PC-3 (cell line): ENCODE measurements at regions of chr1 and their contacts with region 1.

Region 1: GRCh38 chr1:215526553-215527151 is 40.5 kb upstream of the KCTD3 start:
- DNase-seq: peak; percentile 92
- ATAC-seq: peak; percentile 75
- H3K4me3 ChIP-seq: no peak overlapping the region
- H3K27ac ChIP-seq: no peak overlapping the region
- H3K4me1 ChIP-seq: no peaks in the 10 kb centered on the region
- H3K27me3 ChIP-seq: no peaks in the 10 kb centered on the region
- CTCF ChIP-seq: peak; percentile 95

Region 2: GRCh38 chr1:214328770-214329469 is 1197.7 kb before region 1 on chr1:
- CTCF ChIA-PET with region 1: interaction called, 3 read pairs
- POLR2A ChIA-PET with region 1: no interaction called
- intact Hi-C with region 1: loop called (anchors 2 kb)
- DNase-seq: peak; percentile 96
- ATAC-seq: peak; percentile 93
- H3K4me3 ChIP-seq: no peak overlapping the region
- H3K27ac ChIP-seq: no peak overlapping the region
- H3K4me1 ChIP-seq: peaks cover 4% of the 10 kb centered on the region
- H3K27me3 ChIP-seq: no peaks in the 10 kb centered on the region
- CTCF ChIP-seq: peak; percentile 96

Region 3: GRCh38 chr1:214637722-214638458 is 888.8 kb before region 1 on chr1:
- CTCF ChIA-PET with region 1: no interaction called
- POLR2A ChIA-PET with region 1: no interaction called
- intact Hi-C with region 1: loop called (anchors 5 kb)
- DNase-seq: peak; percentile 68
- ATAC-seq: peak; percentile 83
- H3K4me3 ChIP-seq: no peak overlapping the region
- H3K27ac ChIP-seq: no peak overlapping the region
- H3K4me1 ChIP-seq: peaks cover 18% of the 10 kb centered on the region
- H3K27me3 ChIP-seq: no peaks in the 10 kb centered on the region
- CTCF ChIP-seq: peak; percentile 97

Region 4: DNA sequence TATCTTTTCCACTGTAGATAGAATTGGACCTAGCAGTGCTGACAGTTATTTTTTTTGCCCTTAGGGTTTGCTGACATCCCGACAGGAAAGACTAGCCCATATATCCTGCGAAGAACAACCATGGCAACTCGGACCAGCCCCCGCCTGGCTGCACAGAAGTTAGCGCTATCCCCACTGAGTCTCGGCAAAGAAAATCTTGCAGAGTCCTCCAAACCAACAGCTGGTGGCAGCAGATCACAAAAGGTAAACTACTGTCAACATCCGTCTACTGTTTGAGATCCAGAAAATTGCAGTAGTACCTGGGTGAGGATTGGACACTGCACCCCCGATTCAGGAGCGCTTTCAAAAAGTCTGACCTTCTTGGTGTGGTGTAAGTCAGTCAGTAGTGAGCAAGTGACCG is 867.9 kb before region 1 on chr1:
- CTCF ChIA-PET with region 1: interaction called, 3 read pairs
- POLR2A ChIA-PET with region 1: no interaction called
- intact Hi-C with region 1: loop called (anchors 1 kb)
- DNase-seq: peak; percentile 46
- ATAC-seq: peak; percentile 70
- H3K4me3 ChIP-seq: no peak overlapping the region
- H3K27ac ChIP-seq: no peak overlapping the region
- H3K4me1 ChIP-seq: no peaks in the 10 kb centered on the region
- H3K27me3 ChIP-seq: no peaks in the 10 kb centered on the region
- CTCF ChIP-seq: peak; percentile 65

Region 5: GRCh38 chr1:214808845-214809460 is 717.7 kb before region 1 on chr1:
- CTCF ChIA-PET with region 1: interaction called, 5 read pairs
- POLR2A ChIA-PET with region 1: no interaction called
- intact Hi-C with region 1: loop called (anchors 1 kb)
- DNase-seq: peak; percentile 85
- ATAC-seq: peak; percentile 99
- H3K4me3 ChIP-seq: no peak overlapping the region
- H3K27ac ChIP-seq: no peak overlapping the region
- H3K4me1 ChIP-seq: no peaks in the 10 kb centered on the region
- H3K27me3 ChIP-seq: no peaks in the 10 kb centered on the region
- CTCF ChIP-seq: peak; percentile 96

Region 6: DNA sequence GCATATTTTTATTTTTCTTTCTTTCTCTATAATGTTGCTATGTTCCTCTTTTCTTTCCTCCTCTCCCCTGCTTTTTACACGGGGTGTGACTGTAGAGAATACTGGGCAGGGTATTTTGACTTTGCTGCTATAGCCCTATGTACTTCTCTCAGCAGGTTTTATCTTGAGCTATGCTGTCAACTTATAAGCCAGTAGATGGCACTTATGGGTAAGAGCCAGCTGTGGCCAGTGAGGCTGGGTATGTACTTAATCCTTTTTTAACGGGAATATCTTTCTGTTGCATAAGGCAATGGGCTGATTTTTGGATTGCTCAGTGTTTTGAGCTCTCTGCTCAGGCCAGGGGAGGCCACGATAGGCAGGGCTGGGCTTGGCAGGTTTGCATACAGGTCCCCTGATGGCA is 345.1 kb before region 1 on chr1:
- CTCF ChIA-PET with region 1: interaction called, 13 read pairs
- POLR2A ChIA-PET with region 1: no interaction called
- intact Hi-C with region 1: loop called (anchors 1 kb)
- DNase-seq: peak; percentile 80
- ATAC-seq: peak; percentile 99
- H3K4me3 ChIP-seq: no peak overlapping the region
- H3K27ac ChIP-seq: no peak overlapping the region
- H3K4me1 ChIP-seq: no peaks in the 10 kb centered on the region
- H3K27me3 ChIP-seq: no peaks in the 10 kb centered on the region
- CTCF ChIP-seq: peak; percentile 91

Region 7: DNA sequence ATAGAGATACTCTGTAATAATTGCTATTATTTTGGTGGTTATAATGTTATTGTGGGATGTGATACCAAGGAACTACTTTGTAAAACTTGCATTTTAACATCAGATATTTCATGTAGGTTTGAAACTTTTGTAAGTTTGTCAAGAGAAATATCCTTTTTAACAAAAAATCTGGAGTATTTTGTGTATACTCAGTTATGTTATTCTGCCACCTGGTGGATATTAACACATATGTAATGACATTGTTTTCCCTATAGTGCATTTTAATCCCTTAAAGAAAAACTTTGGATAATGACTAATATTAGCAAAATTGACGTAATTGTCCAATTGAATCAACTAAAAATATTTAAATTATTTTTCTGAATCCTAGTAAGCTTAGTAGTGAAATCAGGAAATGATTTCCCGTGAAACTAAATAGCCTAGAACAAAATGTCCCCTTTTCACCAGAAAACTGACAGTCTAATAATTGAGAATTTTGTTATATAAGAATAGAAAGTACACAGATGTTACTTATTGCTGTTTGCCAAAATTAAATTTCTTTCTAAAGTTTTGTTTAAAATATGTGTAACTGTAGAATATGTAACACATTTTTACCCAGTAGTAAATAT is 80.0 kb after region 1 on chr1:
- CTCF ChIA-PET with region 1: no interaction called
- POLR2A ChIA-PET with region 1: no interaction called
- intact Hi-C with region 1: loop called (anchors 1 kb)
- DNase-seq: peak; percentile 75
- ATAC-seq: peak; percentile 78
- H3K4me3 ChIP-seq: no peak overlapping the region
- H3K27ac ChIP-seq: no peak overlapping the region
- H3K4me1 ChIP-seq: no peaks in the 10 kb centered on the region
- H3K27me3 ChIP-seq: no peaks in the 10 kb centered on the region
- CTCF ChIP-seq: peak; percentile 95

Region 8: DNA sequence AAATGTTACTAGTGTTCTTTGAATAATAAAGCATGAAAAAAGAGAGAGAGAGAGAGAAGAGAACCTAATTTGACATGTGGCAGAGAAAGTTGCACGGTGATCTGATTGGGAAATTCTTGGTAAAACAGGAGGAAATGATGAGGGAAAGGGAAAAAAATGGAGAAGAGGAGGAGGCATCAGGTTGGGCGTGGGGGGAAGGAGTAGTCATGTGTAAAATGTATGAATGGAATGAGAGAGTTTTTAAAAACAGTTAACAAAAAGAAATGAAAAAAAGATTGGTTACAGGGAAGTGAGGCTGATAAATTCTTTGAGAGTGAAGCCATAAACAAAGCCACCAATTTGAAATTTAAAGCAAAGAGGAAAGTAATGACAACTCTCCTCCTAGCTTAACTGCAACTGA is 487.4 kb after region 1 on chr1:
- CTCF ChIA-PET with region 1: no interaction called
- POLR2A ChIA-PET with region 1: no interaction called
- intact Hi-C with region 1: no loop called
- DNase-seq: no peak
- ATAC-seq: no peak
- H3K4me3 ChIP-seq: no peak overlapping the region
- H3K27ac ChIP-seq: no peak overlapping the region
- H3K4me1 ChIP-seq: no peaks in the 10 kb centered on the region
- H3K27me3 ChIP-seq: peaks cover 30% of the 10 kb centered on the region
- CTCF ChIP-seq: no peak